A673 (cell line): ENCODE measurements at regions of chr11 and their contacts with region 1.

Region 1: GRCh38 chr11:69801519-69802335 is 17.5 kb downstream of the FGF3 start:
- DNase-seq: peak; percentile 42
- H3K4me3 ChIP-seq: no peak overlapping the region
- H3K27ac ChIP-seq: no peak overlapping the region
- H3K4me1 ChIP-seq: no peaks in the 10 kb centered on the region
- H3K27me3 ChIP-seq: no peaks in the 10 kb centered on the region
- CTCF ChIP-seq: peak; percentile 92

Region 2: GRCh38 chr11:69704508-69705253 is 97.0 kb before region 1 on chr11:
- CTCF ChIA-PET with region 1: interaction called, 6 read pairs
- POLR2A ChIA-PET with region 1: no interaction called
- intact Hi-C with region 1: loop called (anchors 1 kb)
- DNase-seq: peak; percentile 94
- H3K4me3 ChIP-seq: peak overlapping the region; percentile 45
- H3K27ac ChIP-seq: no peak overlapping the region
- H3K4me1 ChIP-seq: peaks cover 44% of the 10 kb centered on the region
- H3K27me3 ChIP-seq: peaks cover 35% of the 10 kb centered on the region
- CTCF ChIP-seq: peak; percentile 75